ENCODE measurements at regions of chr7 and their contacts with region 1.

Region 1: GRCh38 chr7:128425850-128426249 is 16.1 kb upstream of the IMPDH1 start:
- DNase-seq: no peak
- ATAC-seq: peak; percentile 51

Region 2: DNA sequence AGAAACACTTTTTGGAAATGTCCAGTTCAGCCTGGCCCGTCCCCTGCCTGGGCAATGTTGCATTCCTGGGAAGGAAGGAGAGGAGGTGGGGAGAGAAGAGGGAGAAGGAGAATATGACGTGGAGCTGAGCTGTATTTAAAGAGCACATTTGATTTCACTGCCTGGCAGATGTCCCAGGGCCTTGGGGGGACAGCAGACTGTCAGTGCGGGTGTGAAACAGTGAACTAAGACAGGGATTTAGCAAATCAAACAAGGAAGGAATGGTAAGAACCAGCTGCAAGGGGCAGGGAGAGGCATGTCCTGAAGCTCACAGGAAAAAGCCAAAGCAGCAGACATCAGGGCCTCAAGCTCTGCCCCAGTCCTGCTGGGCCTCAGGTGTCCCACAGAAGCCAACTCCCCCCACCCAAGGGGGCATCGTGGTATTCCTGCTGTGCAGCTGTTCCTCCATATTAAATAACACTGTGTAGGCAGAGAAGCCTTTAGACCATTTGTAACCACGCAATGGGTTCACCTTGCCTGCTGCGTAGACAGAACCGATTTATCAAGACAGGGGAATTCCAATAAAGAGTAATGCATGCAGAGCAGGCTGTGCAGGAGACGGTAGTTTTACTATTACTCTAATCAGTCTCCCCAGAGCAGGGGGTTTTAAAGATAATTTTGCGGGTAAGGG is 166.6 kb before region 1 on chr7:
- intact Hi-C with region 1: no loop called
- DNase-seq: no peak
- ATAC-seq: no peak

Region 3: GRCh38 chr7:128398016-128398840 is 27.6 kb before region 1 on chr7:
- intact Hi-C with region 1: loop called (anchors 1 kb)
- DNase-seq: no peak
- ATAC-seq: peak; percentile 78